PC-9 (cell line): ENCODE measurements at regions of chr2 and their contacts with region 1.

Region 1: DNA sequence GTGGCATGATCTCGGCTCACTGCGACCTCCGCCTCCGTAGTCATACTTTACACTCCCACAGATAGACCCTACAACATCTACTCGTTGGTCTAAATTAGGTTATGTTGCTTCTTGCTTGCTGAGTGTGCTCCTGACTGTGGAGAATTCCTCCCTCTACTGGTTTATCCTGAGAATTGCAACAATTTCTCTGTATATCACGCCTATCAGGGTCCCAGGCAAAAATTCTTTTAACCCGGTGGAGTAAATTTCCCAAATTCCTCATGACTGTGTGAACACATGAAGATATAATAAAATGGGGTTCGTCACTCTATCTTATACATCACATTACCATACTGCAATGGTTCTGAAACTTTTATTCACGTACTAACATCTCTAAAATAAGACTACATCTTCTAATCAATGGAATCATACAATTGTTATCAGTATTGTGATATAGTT is 156.7 kb downstream of the EVA1A start:
- DNase-seq: no peak
- H3K4me3 ChIP-seq: no peak overlapping the region
- H3K27ac ChIP-seq: no peak overlapping the region
- H3K4me1 ChIP-seq: no peaks in the 10 kb centered on the region
- H3K27me3 ChIP-seq: no peaks in the 10 kb centered on the region
- CTCF ChIP-seq: peak; percentile 96

Region 2: GRCh38 chr2:74690571-74690970 is 713.4 kb before region 1 on chr2:
- CTCF ChIA-PET with region 1: no interaction called
- POLR2A ChIA-PET with region 1: no interaction called
- intact Hi-C with region 1: loop called (anchors 5 kb)
- DNase-seq: peak; percentile 24 to 64
- H3K4me3 ChIP-seq: no peak overlapping the region
- H3K27ac ChIP-seq: no peak overlapping the region
- H3K4me1 ChIP-seq: peaks cover 22% of the 10 kb centered on the region
- H3K27me3 ChIP-seq: no peaks in the 10 kb centered on the region
- CTCF ChIP-seq: peak; percentile 93

Region 3: GRCh38 chr2:75053484-75054112 is 350.4 kb before region 1 on chr2:
- CTCF ChIA-PET with region 1: no interaction called
- POLR2A ChIA-PET with region 1: no interaction called
- intact Hi-C with region 1: loop called (anchors 2 kb)
- DNase-seq: peak; percentile 37 to 57
- H3K4me3 ChIP-seq: no peak overlapping the region
- H3K27ac ChIP-seq: no peak overlapping the region
- H3K4me1 ChIP-seq: no peaks in the 10 kb centered on the region
- H3K27me3 ChIP-seq: no peaks in the 10 kb centered on the region
- CTCF ChIP-seq: peak; percentile 93

Region 4: GRCh38 chr2:75130171-75130570 is 273.8 kb before region 1 on chr2:
- CTCF ChIA-PET with region 1: no interaction called
- POLR2A ChIA-PET with region 1: no interaction called
- intact Hi-C with region 1: loop called (anchors 1 kb)
- DNase-seq: no peak
- H3K4me3 ChIP-seq: no peak overlapping the region
- H3K27ac ChIP-seq: no peak overlapping the region
- H3K4me1 ChIP-seq: no peaks in the 10 kb centered on the region
- H3K27me3 ChIP-seq: no peaks in the 10 kb centered on the region
- CTCF ChIP-seq: peak; percentile 42

Region 5: DNA sequence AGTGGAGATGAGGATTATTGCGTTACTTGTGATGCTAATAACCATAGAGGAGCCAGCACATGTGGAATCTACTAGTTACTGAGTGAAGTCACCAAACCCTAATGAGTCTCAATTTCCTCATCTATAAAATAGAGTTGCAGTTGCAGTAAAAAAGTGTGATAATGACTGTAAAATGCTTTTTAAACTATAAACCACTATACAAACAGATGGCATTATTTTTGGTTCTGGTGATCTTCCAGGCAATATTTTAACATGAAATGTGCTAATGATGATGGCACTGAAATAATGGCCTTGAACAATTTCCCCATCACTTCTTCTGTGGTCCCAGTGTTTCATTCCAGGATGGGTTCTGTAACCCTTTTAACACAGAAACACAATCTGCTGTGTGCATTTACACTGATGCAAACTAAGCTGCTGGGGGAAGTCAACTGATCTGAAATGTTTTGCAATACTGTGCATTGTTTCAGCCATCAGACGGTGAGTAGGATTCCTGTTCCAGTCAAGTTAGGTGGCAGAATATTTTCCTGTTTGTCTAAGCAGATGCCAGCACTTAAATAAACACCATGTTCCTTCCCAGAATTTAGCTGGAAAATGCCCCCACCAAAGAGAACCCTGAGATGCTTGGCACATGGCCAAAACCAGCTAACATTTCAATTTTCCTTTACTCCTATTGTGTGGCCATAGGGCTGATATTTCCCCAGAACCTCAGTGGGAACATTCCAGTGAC is 257.2 kb before region 1 on chr2:
- CTCF ChIA-PET with region 1: no interaction called
- POLR2A ChIA-PET with region 1: no interaction called
- intact Hi-C with region 1: no loop called
- DNase-seq: peak in 1 of 2 experiments; percentile 72
- H3K4me3 ChIP-seq: no peak overlapping the region
- H3K27ac ChIP-seq: peak overlapping the region; percentile 29; the same call in 1 of the 2 replicates
- H3K4me1 ChIP-seq: peaks cover 38% of the 10 kb centered on the region
- H3K27me3 ChIP-seq: no peaks in the 10 kb centered on the region
- CTCF ChIP-seq: no peak

Region 6: DNA sequence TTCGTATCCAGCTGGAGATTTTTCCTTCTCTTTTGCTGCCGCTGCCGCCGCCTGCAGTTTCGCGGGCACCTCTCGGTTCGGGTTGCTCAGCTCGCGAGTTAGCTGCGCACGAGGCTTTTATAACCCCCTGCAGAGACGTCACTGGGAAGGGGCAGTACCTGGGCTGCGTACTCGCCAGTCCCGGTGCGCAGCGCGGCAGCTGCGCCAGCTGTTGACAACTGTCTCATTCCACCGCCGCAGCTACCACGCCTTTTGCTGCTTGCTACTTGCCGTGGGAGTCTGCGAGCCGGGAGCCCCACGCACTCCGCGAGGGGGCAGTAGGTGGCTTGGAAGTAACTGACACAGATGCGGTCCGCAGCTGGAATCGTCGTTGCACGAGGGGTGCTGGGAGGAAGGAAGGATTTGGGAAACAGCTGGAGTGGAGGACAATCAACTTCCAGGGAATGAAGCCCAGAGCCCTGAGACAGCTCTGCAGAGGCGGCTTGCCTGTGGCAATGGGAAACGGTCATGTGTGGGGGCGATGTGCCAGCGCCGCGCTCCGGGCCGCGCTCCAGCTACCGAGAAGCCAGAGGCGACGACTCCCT is 204.5 kb before region 1 on chr2 and contains the start of gene TACR1:
- CTCF ChIA-PET with region 1: no interaction called
- POLR2A ChIA-PET with region 1: no interaction called
- intact Hi-C with region 1: loop called (anchors 1 kb)
- DNase-seq: peak; percentile 38 to 54
- H3K4me3 ChIP-seq: peak within 1 kb of the TSS; percentile 72
- H3K27ac ChIP-seq: no peak within 1 kb of the TSS
- H3K4me1 ChIP-seq: peaks cover 6% of the 10 kb centered on the region
- H3K27me3 ChIP-seq: peaks cover 34% of the 10 kb centered on the region; the same call in 1 of the 2 replicates
- CTCF ChIP-seq: peak; percentile 57; the same call in 1 of the 2 replicates
- total RNA-seq, gene TACR1: not detected in 2 replicates